CD8-positive, alpha-beta T cell (primary cell): ENCODE measurements at regions of chr12 and their contacts with region 1.

Region 1: DNA sequence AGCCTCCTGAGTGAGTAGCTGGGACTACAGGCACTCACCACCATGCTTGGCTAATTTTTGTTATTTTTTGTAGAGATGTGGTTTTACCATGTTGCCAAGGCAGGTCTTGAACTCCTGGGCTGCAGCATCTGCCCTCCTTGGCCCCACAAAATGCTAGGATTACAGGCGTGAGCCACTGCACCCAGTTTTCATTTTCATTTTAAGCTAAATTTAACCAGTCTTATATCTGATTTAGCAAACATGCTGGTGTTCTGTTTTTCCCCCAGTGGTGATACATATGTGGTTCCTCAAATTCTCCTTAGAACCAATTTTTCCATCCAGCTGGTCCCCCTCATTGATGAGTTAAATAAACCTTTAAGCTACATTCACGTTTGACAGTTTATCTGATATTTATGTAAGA is 43.8 kb upstream of the BICD1 start:
- DNase-seq: no peak
- ATAC-seq: no peak
- H3K4me3 ChIP-seq: no peak overlapping the region
- H3K4me3 Mint-ChIP-seq: no peak overlapping the region
- H3K27ac ChIP-seq: no peak overlapping the region
- H3K27ac Mint-ChIP-seq: no peak overlapping the region
- H3K4me1 ChIP-seq: peaks cover 4% of the 10 kb centered on the region
- H3K4me1 Mint-ChIP-seq: peaks cover 13% of the 10 kb centered on the region
- H3K27me3 ChIP-seq: no peaks in the 10 kb centered on the region
- H3K27me3 Mint-ChIP-seq: no peaks in the 10 kb centered on the region
- CTCF ChIP-seq: no peak

Region 2: DNA sequence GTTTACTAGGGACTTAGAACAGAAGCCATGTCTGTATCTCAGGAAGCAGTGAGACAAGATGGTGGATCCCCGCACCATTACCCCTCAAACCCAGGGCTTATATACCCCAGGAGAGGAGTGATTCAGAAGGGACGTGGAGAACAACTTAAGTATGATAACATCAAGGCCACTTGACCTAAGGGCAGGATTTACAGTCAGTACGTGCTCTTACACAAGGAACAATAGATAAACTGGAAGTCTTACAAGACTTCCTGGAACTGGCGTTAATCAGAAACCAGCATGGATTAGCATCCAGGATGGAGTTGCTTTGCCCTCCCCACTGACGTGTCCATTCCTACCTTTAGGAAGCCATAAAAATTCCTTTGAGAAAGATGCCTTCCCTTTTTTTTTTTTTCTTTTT is 412.0 kb before region 1 on chr12:
- CTCF ChIA-PET with region 1: interaction called, 8 read pairs
- POLR2A ChIA-PET with region 1: no interaction called
- intact Hi-C with region 1: loop called (anchors 1 to 2 kb)
- DNase-seq: no peak
- ATAC-seq: no peak
- H3K4me3 ChIP-seq: no peak overlapping the region
- H3K4me3 Mint-ChIP-seq: no peak overlapping the region
- H3K27ac ChIP-seq: no peak overlapping the region
- H3K27ac Mint-ChIP-seq: no peak overlapping the region
- H3K4me1 ChIP-seq: peaks cover 6% of the 10 kb centered on the region
- H3K4me1 Mint-ChIP-seq: peaks cover 12% of the 10 kb centered on the region
- H3K27me3 ChIP-seq: no peaks in the 10 kb centered on the region
- H3K27me3 Mint-ChIP-seq: no peaks in the 10 kb centered on the region
- CTCF ChIP-seq: no peak

Region 3: DNA sequence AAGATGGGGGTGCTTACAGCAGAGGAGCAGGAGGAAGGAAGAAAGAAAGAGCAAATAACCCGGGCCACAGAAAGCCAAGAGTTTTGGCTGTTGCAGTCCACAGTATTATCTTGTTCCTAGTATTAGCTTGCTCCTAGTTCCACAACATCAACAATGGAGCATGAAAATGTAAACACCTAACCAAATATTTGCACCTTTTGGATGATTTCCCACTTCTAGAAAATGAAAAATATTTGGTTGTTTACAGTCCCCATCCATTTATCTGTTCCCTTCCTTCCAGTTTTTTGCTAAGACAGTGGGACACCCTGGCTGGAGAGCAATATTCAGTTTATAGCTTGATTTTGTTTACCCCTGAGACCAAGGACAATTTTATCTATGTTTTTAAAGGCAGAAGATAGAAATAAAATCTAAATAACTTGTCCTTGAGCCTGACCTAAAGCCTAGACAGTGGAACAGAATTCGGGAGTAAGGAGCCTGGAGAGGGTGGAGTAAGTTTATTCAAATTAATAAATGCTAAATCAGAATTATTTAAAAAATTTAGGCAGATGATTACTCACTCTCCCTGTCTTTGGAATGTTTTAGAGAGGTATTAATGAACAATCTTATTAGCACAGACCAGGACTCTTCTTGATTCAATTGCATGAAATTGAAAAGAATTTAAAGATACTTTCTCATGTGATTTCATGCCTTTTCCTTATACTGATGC is 52.1 kb before region 1 on chr12:
- CTCF ChIA-PET with region 1: no interaction called
- POLR2A ChIA-PET with region 1: no interaction called
- intact Hi-C with region 1: no loop called
- DNase-seq: no peak
- ATAC-seq: no peak
- H3K4me3 ChIP-seq: no peak overlapping the region
- H3K4me3 Mint-ChIP-seq: no peak overlapping the region
- H3K27ac ChIP-seq: no peak overlapping the region
- H3K27ac Mint-ChIP-seq: no peak overlapping the region
- H3K4me1 ChIP-seq: peaks cover 6% of the 10 kb centered on the region
- H3K4me1 Mint-ChIP-seq: peaks cover 6% of the 10 kb centered on the region
- H3K27me3 ChIP-seq: no peaks in the 10 kb centered on the region
- H3K27me3 Mint-ChIP-seq: no peaks in the 10 kb centered on the region
- CTCF ChIP-seq: no peak

Region 4: DNA sequence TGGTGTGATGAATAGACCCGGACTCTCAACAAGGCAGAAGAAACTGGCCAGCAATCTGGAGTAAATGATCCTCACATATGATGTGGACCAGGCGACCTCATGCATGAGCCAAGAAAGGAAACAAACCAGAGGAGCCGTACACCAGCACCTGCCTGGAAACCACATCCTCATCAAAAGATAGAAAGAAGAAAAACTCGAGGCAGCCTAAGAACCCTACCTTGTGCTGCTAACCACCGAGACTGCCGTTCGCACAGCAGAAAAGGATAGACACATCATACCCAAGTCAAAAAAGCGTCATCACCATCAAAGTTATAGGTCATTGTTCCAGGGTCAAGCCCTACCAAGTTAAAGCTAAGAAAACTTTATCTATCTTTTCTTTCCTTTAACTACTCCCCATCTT is 37.0 kb before region 1 on chr12:
- CTCF ChIA-PET with region 1: interaction called, 11 read pairs
- POLR2A ChIA-PET with region 1: no interaction called
- intact Hi-C with region 1: no loop called
- DNase-seq: peak; percentile 2 to 80 (median 41)
- ATAC-seq: peak; percentile 94
- H3K4me3 ChIP-seq: no peak overlapping the region
- H3K4me3 Mint-ChIP-seq: peak overlapping the region; percentile 1
- H3K27ac ChIP-seq: peak overlapping the region in 1 of 2 experiments; percentile 12
- H3K27ac Mint-ChIP-seq: peak overlapping the region; percentile 73
- H3K4me1 ChIP-seq: peaks cover 22% of the 10 kb centered on the region
- H3K4me1 Mint-ChIP-seq: peaks cover 30% of the 10 kb centered on the region
- H3K27me3 ChIP-seq: no peaks in the 10 kb centered on the region
- H3K27me3 Mint-ChIP-seq: no peaks in the 10 kb centered on the region
- CTCF ChIP-seq: no peak

Region 5: GRCh38 chr12:32076941-32077340 is 14.1 kb after region 1 on chr12:
- CTCF ChIA-PET with region 1: interaction called, 12 read pairs
- POLR2A ChIA-PET with region 1: no interaction called
- intact Hi-C with region 1: no loop called
- DNase-seq: no peak
- ATAC-seq: no peak
- H3K4me3 ChIP-seq: no peak overlapping the region
- H3K4me3 Mint-ChIP-seq: no peak overlapping the region
- H3K27ac ChIP-seq: no peak overlapping the region
- H3K27ac Mint-ChIP-seq: no peak overlapping the region
- H3K4me1 ChIP-seq: no peaks in the 10 kb centered on the region
- H3K4me1 Mint-ChIP-seq: no peaks in the 10 kb centered on the region
- H3K27me3 ChIP-seq: no peaks in the 10 kb centered on the region
- H3K27me3 Mint-ChIP-seq: no peaks in the 10 kb centered on the region
- CTCF ChIP-seq: no peak

Region 6: GRCh38 chr12:32273712-32274111 is 210.8 kb after region 1 on chr12:
- CTCF ChIA-PET with region 1: interaction called, 3 read pairs
- POLR2A ChIA-PET with region 1: no interaction called
- intact Hi-C with region 1: loop called in 1 of 2 experiments (anchors 1 kb)
- DNase-seq: peak; percentile 13 to 79 (median 59)
- ATAC-seq: peak; percentile 98
- H3K4me3 ChIP-seq: no peak overlapping the region
- H3K4me3 Mint-ChIP-seq: peak overlapping the region; percentile 72
- H3K27ac ChIP-seq: peak overlapping the region; percentile 36 to 75
- H3K27ac Mint-ChIP-seq: peak overlapping the region; percentile 99
- H3K4me1 ChIP-seq: peaks cover 20% of the 10 kb centered on the region
- H3K4me1 Mint-ChIP-seq: peaks cover 20% of the 10 kb centered on the region
- H3K27me3 ChIP-seq: no peaks in the 10 kb centered on the region
- H3K27me3 Mint-ChIP-seq: no peaks in the 10 kb centered on the region
- CTCF ChIP-seq: no peak

Region 7: DNA sequence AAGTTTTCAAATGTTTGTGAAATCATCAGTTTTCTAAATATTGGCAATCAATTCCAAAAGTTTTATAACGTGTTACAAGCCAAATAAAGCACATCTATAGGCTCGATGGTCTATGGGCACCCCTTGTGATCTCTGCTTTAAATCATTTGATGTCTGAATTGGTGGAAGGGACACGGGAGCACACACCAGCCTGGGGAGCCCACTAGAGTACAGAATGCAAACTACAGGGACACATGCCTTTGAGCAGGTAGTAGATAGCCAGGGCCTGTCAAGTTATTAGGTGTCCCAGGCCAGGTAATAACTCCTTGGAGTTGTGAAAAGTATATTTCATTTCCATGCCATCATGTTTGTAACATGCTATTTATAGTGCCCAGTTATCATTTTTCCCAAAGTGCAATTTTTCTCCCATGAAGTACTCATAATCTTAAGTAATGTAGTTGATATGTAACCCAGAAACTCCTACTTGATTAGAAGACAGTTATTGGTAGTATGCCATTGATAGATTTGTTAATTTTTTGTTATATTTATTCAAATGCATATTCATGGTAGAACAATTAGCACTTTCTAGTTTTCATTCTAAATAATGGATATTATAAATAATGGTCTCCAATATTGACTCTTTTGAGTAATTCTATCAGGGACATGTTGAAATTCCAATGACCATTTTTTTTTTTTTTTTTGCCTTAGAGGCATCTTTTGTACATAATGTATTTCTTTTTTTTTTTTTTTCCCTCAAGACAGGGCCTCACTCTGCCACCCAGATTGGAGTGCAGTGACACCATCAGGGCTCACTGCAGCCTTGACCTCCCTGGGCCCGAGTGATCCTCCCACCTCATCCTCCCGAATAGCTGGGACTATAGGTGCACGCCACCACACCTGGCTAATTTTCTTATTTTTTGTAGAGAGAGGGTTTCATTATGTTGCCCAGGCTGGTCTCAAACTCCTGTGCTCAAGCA is 239.6 kb after region 1 on chr12:
- CTCF ChIA-PET with region 1: interaction called, 8 read pairs
- POLR2A ChIA-PET with region 1: no interaction called
- intact Hi-C with region 1: loop called (anchors 1 kb)
- DNase-seq: peak in 1 of 9 experiments; percentile 35
- ATAC-seq: no peak
- H3K4me3 ChIP-seq: no peak overlapping the region
- H3K4me3 Mint-ChIP-seq: no peak overlapping the region
- H3K27ac ChIP-seq: no peak overlapping the region
- H3K27ac Mint-ChIP-seq: no peak overlapping the region
- H3K4me1 ChIP-seq: no peaks in the 10 kb centered on the region
- H3K4me1 Mint-ChIP-seq: peaks cover 5% of the 10 kb centered on the region
- H3K27me3 ChIP-seq: no peaks in the 10 kb centered on the region
- H3K27me3 Mint-ChIP-seq: no peaks in the 10 kb centered on the region
- CTCF ChIP-seq: peak; percentile 21

Region 8: GRCh38 chr12:32312049-32312670 is 249.3 kb after region 1 on chr12:
- CTCF ChIA-PET with region 1: interaction called, 13 read pairs
- POLR2A ChIA-PET with region 1: no interaction called
- intact Hi-C with region 1: loop called (anchors 1 to 2 kb)
- DNase-seq: peak in 2 of 9 experiments; percentile 58 to 72
- ATAC-seq: peak; percentile 44
- H3K4me3 ChIP-seq: no peak overlapping the region
- H3K4me3 Mint-ChIP-seq: no peak overlapping the region
- H3K27ac ChIP-seq: no peak overlapping the region
- H3K27ac Mint-ChIP-seq: no peak overlapping the region
- H3K4me1 ChIP-seq: no peaks in the 10 kb centered on the region
- H3K4me1 Mint-ChIP-seq: peaks cover 3% of the 10 kb centered on the region
- H3K27me3 ChIP-seq: no peaks in the 10 kb centered on the region
- H3K27me3 Mint-ChIP-seq: no peaks in the 10 kb centered on the region
- CTCF ChIP-seq: peak; percentile 35